Tibial artery (tissue), 4 donors: ENCODE measurements at regions of chr6 and their contacts with region 1.

Region 1: GRCh38 chr6:163170294-163170883 is 244.1 kb upstream of the QKI start:
- DNase-seq: no peak
- H3K4me3 ChIP-seq: no peak overlapping the region
- H3K27ac ChIP-seq: no peak overlapping the region
- H3K4me1 ChIP-seq: no peaks in the 10 kb centered on the region
- H3K27me3 ChIP-seq: no peaks in the 10 kb centered on the region
- CTCF ChIP-seq: peak; percentile 31 to 48

Region 2: GRCh38 chr6:163120223-163120622 is 50.2 kb before region 1 on chr6:
- intact Hi-C with region 1: no loop called
- DNase-seq: no peak
- H3K4me3 ChIP-seq: no peak overlapping the region
- H3K27ac ChIP-seq: no peak overlapping the region
- H3K4me1 ChIP-seq: no peaks in the 10 kb centered on the region
- H3K27me3 ChIP-seq: no peaks in the 10 kb centered on the region
- CTCF ChIP-seq: no peak

Region 3: GRCh38 chr6:163943607-163944385 is 773.4 kb after region 1 on chr6:
- intact Hi-C with region 1: loop called (anchors 10 kb)
- DNase-seq: no peak
- H3K4me3 ChIP-seq: peak overlapping the region in 1 of 2 donors; percentile 0
- H3K27ac ChIP-seq: no peak overlapping the region
- H3K4me1 ChIP-seq: peaks cover 0 to 23% (median 15%) of the 10 kb centered on the region in 4 donors
- H3K27me3 ChIP-seq: no peaks in the 10 kb centered on the region
- CTCF ChIP-seq: no peak